Calu3 (cell line): ENCODE measurements at regions of chr2 and their contacts with region 1.

Region 1: DNA sequence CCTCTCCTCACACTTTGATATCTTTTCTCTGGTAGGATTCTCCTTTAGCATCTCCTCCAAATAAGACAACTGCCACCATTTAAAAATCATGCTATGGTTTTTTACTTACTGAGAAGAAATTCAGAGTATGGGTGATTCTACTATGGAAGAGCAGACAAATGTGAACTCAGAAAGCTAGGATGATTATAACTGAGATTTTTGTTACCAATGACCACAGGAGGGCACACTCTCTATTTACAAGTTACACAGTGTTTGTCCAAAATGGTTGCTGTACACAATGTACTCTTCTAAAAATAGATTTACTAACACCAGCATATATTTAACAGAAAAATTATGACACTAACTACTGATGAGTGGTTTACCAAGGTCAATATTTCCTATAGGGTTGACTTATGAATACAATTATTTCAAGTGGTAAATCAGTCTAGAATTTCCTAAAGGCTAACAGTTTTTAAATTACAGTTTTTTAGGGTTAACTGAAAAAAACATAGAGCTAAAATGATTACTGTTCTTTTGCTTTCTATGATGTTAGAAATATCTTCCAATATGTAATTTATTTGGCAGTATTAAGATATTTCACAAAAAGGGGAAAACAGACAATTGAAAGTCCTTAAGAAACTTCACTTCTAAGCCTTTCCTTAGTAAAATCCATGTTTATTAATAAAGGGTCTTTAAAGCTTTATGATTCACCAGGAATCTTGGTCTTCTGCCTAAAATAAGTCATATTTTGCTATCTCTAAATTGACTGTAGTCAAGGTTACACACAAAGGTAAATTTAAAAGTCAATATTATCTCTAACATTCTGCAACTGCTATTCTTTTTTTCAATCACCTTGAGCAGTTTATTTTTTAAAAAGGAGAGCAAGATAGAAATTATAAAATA is 57.2 kb downstream of the MAP4K3 start:
- DNase-seq: peak; percentile 17
- H3K4me3 Mint-ChIP-seq: no peak overlapping the region
- H3K27ac Mint-ChIP-seq: no peak overlapping the region
- H3K4me1 Mint-ChIP-seq: peaks cover 14% of the 10 kb centered on the region
- H3K27me3 Mint-ChIP-seq: no peaks in the 10 kb centered on the region
- CTCF ChIP-seq: no peak

Region 2: DNA sequence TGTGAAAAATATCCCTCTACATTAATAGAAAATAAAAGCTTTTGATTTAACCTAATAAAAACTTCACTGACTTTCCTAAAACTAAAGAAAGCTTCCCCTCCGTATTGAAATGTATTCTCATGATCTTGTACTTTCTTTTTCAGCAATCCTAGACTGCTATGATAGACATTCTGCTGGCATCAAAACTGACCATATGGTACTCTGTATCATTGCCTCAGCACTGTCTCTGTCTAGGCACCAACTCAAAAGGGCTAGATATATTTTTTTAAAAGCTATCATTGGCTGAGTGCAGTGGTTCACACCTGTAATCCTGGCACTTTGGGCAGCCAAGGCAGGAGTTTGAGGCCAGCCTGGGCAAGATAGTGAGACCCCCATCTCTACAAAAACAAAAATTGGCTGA is 169.0 kb before region 1 on chr2:
- CTCF ChIA-PET with region 1: no interaction called
- intact Hi-C with region 1: no loop called
- DNase-seq: no peak
- H3K4me3 Mint-ChIP-seq: no peak overlapping the region
- H3K27ac Mint-ChIP-seq: no peak overlapping the region
- H3K4me1 Mint-ChIP-seq: no peaks in the 10 kb centered on the region
- H3K27me3 Mint-ChIP-seq: no peaks in the 10 kb centered on the region
- CTCF ChIP-seq: no peak

Region 3: DNA sequence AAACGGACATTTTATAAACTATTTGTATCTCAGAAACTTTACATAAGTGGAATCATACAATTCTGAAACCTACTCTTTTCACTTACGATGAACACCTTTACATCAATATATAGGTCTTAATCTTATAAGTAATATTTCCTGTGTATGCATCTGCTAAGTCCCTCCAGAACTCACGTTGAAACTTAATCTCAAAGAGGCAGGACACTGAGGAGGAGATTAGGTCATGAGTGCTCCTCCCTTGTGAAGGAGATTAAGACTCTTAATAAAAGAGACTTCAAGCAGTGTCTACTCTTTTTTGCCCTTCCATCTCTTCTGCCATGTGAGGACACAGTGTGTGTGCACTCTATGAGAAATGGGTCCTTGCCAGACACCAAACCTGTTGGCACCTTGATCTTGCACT is 41.4 kb before region 1 on chr2:
- CTCF ChIA-PET with region 1: no interaction called
- intact Hi-C with region 1: no loop called
- DNase-seq: no peak
- H3K4me3 Mint-ChIP-seq: no peak overlapping the region
- H3K27ac Mint-ChIP-seq: no peak overlapping the region
- H3K4me1 Mint-ChIP-seq: peaks cover under 1% of the 10 kb centered on the region
- H3K27me3 Mint-ChIP-seq: no peaks in the 10 kb centered on the region
- CTCF ChIP-seq: no peak

Region 4: DNA sequence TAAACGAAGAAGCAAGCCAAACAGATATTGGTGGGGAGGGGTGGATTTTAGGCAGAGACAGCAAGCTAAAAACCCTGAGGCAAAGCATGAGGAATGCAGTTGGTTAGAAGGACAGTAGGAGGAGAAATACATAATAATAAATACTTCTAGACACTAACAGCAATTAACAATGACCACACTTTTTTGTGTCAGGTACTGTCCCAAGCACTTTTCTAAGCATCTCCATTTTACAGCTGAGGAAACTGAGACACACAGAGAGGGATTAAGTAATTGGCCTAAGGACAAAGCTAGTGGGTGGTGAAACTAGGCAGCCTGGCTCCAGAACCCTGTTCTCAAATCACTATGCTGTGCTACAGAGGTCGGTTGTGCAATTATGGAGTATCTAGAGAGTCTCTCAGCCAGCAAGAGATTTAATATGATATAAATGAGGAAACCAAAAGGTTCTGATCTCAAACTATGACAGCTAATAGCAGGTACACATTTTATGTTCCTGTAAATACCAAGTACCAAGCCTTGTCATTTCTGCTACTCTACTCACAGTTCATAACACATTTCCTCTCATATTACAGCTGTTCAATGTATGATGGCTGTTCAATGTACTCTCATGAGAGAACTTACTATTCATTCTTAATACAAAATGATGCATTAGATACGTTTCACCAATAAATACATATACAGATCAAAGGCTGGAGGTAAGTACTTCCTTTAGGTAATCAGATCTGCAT is 51.9 kb after region 1 on chr2:
- CTCF ChIA-PET with region 1: interaction called, 5 read pairs
- intact Hi-C with region 1: loop called (anchors 5 kb)
- DNase-seq: no peak
- H3K4me3 Mint-ChIP-seq: no peak overlapping the region
- H3K27ac Mint-ChIP-seq: no peak overlapping the region
- H3K4me1 Mint-ChIP-seq: peaks cover 76% of the 10 kb centered on the region
- H3K27me3 Mint-ChIP-seq: no peaks in the 10 kb centered on the region
- CTCF ChIP-seq: no peak

Region 5: DNA sequence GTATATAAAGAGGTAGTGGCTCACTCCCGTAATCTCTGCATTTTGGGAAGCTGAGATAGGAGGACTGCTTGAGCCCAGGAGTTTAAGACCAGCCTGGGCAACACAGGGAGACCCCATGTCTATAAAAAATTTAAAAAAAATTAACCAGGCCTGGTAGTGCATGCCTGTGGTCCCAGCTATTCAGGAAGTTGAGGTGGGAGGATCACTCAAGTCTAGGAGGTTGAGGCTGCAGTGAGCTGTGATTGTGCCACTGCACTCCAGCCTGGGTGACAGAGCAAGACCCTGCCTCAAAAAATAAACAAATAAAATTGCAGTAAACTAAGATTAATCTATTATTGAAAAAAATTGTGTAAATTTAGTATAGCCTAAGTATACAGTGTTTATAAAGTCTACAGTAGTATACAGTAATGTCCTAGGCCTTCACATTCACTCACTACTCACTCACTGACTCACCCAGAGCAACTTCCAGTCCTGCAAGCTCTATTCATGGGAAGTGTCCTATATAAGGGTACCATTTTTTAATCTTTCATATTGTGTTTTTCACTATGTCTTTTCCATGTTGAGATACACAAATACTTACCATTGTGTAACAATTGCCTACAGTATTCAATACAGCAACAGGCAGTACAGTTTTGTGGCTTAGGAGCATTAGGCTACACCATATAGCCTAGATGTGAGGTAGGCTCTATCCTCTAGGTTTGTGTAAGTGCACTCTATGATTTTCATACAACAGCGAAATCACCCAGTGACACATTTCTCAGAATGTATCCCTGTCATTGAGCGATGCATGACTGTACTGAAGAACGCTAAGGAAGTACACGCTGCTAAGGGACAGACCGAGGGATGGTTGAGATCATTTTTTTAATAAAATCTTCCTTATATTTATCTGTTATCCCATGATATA is 67.6 kb after region 1 on chr2:
- CTCF ChIA-PET with region 1: no interaction called
- intact Hi-C with region 1: no loop called
- DNase-seq: no peak
- H3K4me3 Mint-ChIP-seq: no peak overlapping the region
- H3K27ac Mint-ChIP-seq: no peak overlapping the region
- H3K4me1 Mint-ChIP-seq: no peaks in the 10 kb centered on the region
- H3K27me3 Mint-ChIP-seq: no peaks in the 10 kb centered on the region
- CTCF ChIP-seq: no peak

Region 6: GRCh38 chr2:39504790-39505335 is 125.0 kb after region 1 on chr2:
- CTCF ChIA-PET with region 1: no interaction called
- intact Hi-C with region 1: loop called (anchors 2 kb)
- DNase-seq: no peak
- H3K4me3 Mint-ChIP-seq: peak overlapping the region; percentile 49
- H3K27ac Mint-ChIP-seq: peak overlapping the region; percentile 76
- H3K4me1 Mint-ChIP-seq: peaks cover 57% of the 10 kb centered on the region
- H3K27me3 Mint-ChIP-seq: no peaks in the 10 kb centered on the region
- CTCF ChIP-seq: no peak

Region 7: GRCh38 chr2:39665811-39666490 is 286.1 kb after region 1 on chr2 and contains the start of gene TMEM178A:
- CTCF ChIA-PET with region 1: no interaction called
- intact Hi-C with region 1: no loop called
- DNase-seq: peak; percentile 14
- H3K4me3 Mint-ChIP-seq: peak within 1 kb of the TSS; percentile 62
- H3K27ac Mint-ChIP-seq: peak within 1 kb of the TSS; percentile 6
- H3K4me1 Mint-ChIP-seq: peaks cover 9% of the 10 kb centered on the region
- H3K27me3 Mint-ChIP-seq: peaks cover 67% of the 10 kb centered on the region
- CTCF ChIP-seq: no peak
- total RNA-seq, gene TMEM178A: 0.50 and 2.1 TPM in 2 replicates